Activated CD4-positive, alpha-beta memory T cell treated with anti-CD3 and anti-CD28 coated beads for 36 hours (primary cell): ENCODE measurements at regions of chr12 and their contacts with region 1.

Region 1: DNA sequence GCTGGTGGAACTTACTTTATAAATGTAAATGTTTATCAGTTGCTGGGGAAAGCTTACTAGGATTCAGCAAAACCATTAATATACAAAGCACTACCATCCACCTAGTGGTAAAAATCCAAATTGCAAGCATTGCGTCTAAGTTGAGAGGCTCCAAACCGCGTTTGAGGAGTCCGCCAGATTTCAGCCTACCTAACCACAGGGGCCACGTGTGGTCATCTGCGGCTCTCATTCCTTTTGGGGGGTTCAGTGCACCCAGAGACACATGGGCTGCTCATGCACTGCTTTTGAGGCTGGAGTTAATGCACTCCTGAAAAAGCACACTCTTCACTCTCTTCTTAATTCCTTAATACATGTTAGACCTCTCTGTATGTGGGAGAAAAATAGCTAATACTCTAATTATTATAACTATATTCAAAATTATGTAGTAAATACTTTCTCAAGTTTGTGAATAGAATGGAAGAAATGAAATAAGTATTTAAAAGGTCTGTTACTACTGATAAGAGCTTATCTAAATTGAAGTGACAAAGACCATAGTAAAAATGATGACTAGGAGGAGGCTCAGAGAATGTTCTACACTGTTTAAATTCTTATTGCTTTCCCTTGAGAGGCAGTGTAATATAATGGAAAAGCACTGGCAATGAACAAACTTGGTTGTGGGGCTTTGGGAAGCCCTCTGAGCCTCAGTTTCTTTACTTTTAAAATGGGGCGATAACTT is 41.4 kb upstream of the MANSC4 start:
- DNase-seq: peak; percentile 28
- H3K4me3 Mint-ChIP-seq: no peak overlapping the region
- H3K27ac Mint-ChIP-seq: no peak overlapping the region
- H3K4me1 Mint-ChIP-seq: peaks cover 43% of the 10 kb centered on the region
- H3K27me3 Mint-ChIP-seq: peaks cover 33% of the 10 kb centered on the region

Region 2: DNA sequence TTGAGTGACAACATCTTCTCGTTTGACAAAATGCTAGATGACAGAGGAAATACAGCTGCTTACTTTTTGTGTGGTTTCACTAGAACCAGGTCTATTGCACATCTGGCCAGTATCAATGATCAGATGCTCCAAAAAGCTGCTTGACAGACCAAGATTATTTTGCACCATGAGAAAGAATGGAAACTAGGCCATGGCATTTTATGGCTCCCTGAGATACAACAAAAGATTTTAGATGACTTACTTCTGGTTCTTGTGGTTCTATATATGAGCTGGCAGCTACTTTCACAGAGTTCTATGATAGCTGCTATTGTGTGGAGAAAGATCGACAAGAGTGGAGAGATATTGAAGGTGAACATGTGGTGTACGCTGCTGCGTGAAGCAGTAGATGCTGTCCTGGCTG is 323.3 kb before region 1 on chr12:
- CTCF ChIA-PET with region 1: no interaction called
- POLR2A ChIA-PET with region 1: no interaction called
- intact Hi-C with region 1: loop called (anchors 1 kb)
- DNase-seq: no peak
- H3K4me3 Mint-ChIP-seq: no peak overlapping the region
- H3K27ac Mint-ChIP-seq: no peak overlapping the region
- H3K4me1 Mint-ChIP-seq: peaks cover 23% of the 10 kb centered on the region
- H3K27me3 Mint-ChIP-seq: peaks cover 31% of the 10 kb centered on the region

Region 3: DNA sequence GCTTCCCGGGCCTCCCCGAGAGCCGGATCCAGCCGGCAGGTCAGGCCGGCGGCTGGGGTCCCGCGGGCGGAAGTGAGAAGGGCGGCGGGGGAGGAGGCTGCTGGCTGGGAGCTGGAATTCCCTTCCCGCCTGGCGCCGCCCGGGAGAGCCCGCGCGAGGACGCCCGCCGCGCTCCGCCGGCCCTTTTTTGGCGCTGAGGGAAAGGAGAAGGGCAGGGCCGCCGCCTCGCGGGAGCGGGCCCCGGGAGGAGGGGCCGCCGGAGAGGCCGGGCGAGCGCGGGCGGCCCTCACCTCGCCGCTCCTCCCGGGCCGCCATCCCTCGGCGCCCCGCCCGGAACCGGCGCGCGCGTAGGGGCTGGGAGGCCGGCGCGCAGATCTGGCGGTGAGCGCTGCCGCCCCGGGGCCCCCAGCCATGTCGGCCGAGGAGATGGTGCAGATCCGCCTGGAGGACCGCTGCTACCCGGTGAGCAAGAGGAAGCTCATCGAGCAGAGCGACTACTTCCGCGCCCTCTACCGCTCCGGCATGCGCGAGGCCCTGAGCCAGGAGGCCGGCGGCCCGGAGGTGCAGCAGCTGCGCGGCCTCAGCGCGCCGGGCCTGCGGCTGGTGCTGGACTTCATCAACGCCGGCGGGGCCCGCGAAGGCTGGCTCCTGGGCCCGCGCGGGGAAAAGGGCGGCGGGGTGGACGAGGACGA is 41.4 kb before region 1 on chr12 and contains the starts of genes KLHL42 and MANSC4:
- CTCF ChIA-PET with region 1: interaction called, 21 read pairs
- POLR2A ChIA-PET with region 1: interaction called, 11 read pairs
- intact Hi-C with region 1: loop called (anchors 1 kb)
- DNase-seq: peak; percentile 73
- H3K4me3 Mint-ChIP-seq: peak within 1 kb of the TSS; percentile 78
- H3K27ac Mint-ChIP-seq: peak within 1 kb of the TSS; percentile 65
- H3K4me1 Mint-ChIP-seq: peaks cover 30% of the 10 kb centered on the region
- H3K27me3 Mint-ChIP-seq: no peaks in the 10 kb centered on the region
- total RNA-seq, gene KLHL42: 8.2 to 9.1 TPM
- total RNA-seq, gene MANSC4: not detected

Region 4: GRCh38 chr12:27807063-27807703 is 14.2 kb before region 1 on chr12:
- CTCF ChIA-PET with region 1: interaction called, 27 read pairs
- POLR2A ChIA-PET with region 1: interaction called, 29 read pairs
- intact Hi-C with region 1: loop called (anchors 1 kb)
- DNase-seq: peak; percentile 56
- H3K4me3 Mint-ChIP-seq: peak overlapping the region; percentile 27
- H3K27ac Mint-ChIP-seq: no peak overlapping the region
- H3K4me1 Mint-ChIP-seq: peaks cover 28% of the 10 kb centered on the region
- H3K27me3 Mint-ChIP-seq: peaks cover 22% of the 10 kb centered on the region

Region 5: DNA sequence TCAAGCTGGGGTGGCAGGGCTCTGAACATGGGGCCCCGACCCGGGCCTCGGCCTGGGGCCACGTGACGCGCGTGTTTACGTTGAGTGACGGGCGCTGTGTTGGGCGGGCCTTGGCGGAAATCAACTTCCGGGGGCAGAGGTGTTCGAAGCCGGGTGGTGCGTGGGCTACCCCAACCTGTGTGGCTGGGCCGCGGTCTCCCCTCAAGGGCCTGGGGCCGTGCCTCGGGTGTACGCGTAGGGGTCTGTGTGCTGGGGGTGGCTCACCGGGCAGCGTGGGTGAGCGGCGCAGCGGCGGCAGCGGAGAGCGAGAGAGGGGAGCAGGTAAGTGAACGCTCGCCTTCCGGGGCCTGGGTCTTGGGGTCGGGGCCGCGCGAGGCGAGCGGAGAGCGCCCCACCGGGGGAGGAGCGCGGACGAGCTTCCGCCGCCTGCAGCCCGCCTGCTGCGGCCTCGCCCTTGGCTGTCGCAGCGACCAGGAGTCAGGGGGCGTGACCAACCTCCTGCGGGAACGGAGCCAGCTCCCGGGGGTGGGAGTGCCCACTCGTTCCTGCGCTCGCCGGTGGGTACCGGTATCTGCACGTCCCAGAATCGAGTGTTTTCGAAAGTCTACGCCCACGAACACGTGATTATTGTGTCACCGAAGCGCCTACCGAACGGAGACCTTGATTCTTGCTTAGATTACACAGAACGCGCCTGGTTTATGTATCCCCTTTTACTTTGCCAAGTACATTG is 369.1 kb after region 1 on chr12 and contains the start of gene CCDC91:
- CTCF ChIA-PET with region 1: no interaction called
- POLR2A ChIA-PET with region 1: interaction called, 3 read pairs
- intact Hi-C with region 1: loop called (anchors 1 kb)
- DNase-seq: peak; percentile 92
- H3K4me3 Mint-ChIP-seq: peak within 1 kb of the TSS; percentile 98
- H3K27ac Mint-ChIP-seq: peak within 1 kb of the TSS; percentile 99
- H3K4me1 Mint-ChIP-seq: peaks cover 57% of the 10 kb centered on the region
- H3K27me3 Mint-ChIP-seq: no peaks in the 10 kb centered on the region
- total RNA-seq, gene CCDC91: 16.5 to 19.7 TPM

Region 6: DNA sequence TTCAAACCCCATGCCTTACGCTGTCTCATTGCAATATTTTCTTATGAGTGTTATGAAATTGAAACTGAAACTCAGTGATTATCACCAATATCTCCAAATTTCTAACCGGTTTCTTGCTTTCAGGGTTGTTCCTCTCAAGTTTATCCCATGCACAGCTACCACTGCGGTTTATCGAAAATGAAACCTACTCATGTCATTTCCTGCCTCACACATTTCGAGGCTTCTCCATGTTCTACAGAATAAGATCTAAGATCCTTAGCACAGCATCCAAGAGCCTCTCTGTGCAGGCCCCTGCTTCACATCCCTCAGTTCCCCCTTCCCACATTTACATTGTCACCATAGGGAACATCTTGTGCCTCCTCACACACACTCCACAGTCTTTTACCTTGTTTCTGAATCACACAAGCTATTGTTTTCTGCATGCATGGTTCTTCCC is 1282.1 kb after region 1 on chr12:
- CTCF ChIA-PET with region 1: no interaction called
- POLR2A ChIA-PET with region 1: no interaction called
- intact Hi-C with region 1: loop called (anchors 1 kb)
- DNase-seq: peak; percentile 64
- H3K4me3 Mint-ChIP-seq: peak overlapping the region; percentile 4
- H3K27ac Mint-ChIP-seq: peak overlapping the region; percentile 56
- H3K4me1 Mint-ChIP-seq: peaks cover 32% of the 10 kb centered on the region
- H3K27me3 Mint-ChIP-seq: no peaks in the 10 kb centered on the region